OCI-LY7 (cell line): ENCODE measurements at regions of chr14 and their contacts with region 1.

Region 1: GRCh38 chr14:40870252-40870651 is 736.4 kb upstream of the LRFN5 start:
- DNase-seq: no peak
- H3K4me3 ChIP-seq: no peak overlapping the region
- H3K27ac ChIP-seq: no peak overlapping the region
- H3K4me1 ChIP-seq: no peaks in the 10 kb centered on the region
- CTCF ChIP-seq: no peak

Region 2: GRCh38 chr14:40859065-40859464 is 11.2 kb before region 1 on chr14:
- CTCF ChIA-PET with region 1: no interaction called
- POLR2A ChIA-PET with region 1: interaction called, 10 read pairs
- intact Hi-C with region 1: no loop called
- DNase-seq: no peak
- H3K4me3 ChIP-seq: no peak overlapping the region
- H3K27ac ChIP-seq: no peak overlapping the region
- H3K4me1 ChIP-seq: no peaks in the 10 kb centered on the region
- CTCF ChIP-seq: no peak